ENCODE measurements at regions of chr11 and their contacts with region 1.

Region 1: DNA sequence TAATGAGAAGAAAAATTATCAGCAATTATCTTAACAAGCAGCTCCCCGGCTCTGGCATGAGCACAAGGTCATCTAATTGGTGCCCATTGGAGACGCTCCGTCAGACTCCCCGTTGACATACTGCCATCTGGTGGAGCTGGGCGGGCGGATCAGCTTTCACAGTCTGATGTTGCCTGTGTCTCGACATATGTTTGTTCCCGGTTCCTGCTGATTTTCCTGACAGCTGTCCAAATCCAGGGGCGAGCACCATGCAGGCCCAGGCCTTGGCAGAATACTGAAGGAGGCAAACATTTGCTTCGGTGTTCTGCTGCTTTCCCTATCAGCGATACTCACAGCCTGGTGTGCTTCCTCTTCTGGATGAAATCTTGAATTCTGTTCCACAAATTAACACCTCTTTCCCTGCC is 43.8 kb upstream of the BARX2 start:
- DNase-seq: peak; percentile 66 to 90 (median 86)
- H3K4me3 ChIP-seq: peak overlapping the region in 3 of 59 donors; percentile 6 to 21 (median 15)
- H3K27ac ChIP-seq: peak overlapping the region in 4 of 59 donors; percentile 16 to 37 (median 22)
- H3K27me3 ChIP-seq: no peaks in the 10 kb centered on the region
- CTCF ChIP-seq: peak; percentile 74 to 98 (median 93)

Region 2: DNA sequence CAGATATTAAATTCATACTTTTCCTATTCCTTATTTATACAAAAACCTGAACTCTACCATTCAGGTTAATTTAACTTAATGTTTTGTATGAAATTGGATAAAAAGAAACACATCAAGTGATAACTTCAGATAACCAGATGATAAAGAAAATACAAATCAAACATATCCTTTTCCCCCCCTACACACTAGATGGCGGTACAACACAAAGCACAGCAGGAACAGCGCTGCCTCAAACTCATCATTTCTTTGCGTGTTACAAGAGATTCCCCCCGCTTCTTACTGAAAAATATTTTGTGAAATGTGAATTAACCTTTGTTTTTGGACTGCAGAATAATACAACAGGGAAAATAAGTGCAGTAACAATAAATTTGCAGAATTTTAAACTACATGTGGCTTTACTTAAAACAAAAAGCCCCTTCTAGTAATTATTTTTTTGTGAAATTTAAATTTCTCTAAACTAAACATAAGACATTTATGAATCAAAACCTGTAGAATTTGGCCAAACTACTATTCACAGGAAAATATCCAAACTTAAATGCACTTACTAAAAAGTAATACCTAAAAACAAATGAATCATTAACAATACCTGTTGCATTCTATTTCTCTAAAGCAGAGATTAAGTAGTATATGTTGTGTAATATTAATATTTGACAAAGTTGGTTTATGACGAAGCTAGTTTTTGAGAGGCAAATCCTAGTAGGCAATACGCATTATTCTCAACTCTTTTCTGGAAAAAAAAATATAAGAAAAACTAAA is 214.1 kb before region 1 on chr11:
- intact Hi-C with region 1: loop called (anchors 2 to 5 kb)
- DNase-seq: peak in 3 of 10 donors; percentile 12 to 54 (median 27)
- H3K4me3 ChIP-seq: no peak overlapping the region
- H3K27ac ChIP-seq: no peak overlapping the region
- H3K27me3 ChIP-seq: no peaks in the 10 kb centered on the region
- CTCF ChIP-seq: peak; percentile 63 to 98 (median 90)

Region 3: GRCh38 chr11:129230006-129230405 is 101.9 kb before region 1 on chr11:
- intact Hi-C with region 1: loop called (anchors 1 to 5 kb)
- DNase-seq: no peak
- H3K4me3 ChIP-seq: no peak overlapping the region
- H3K27ac ChIP-seq: no peak overlapping the region
- H3K27me3 ChIP-seq: no peaks in the 10 kb centered on the region
- CTCF ChIP-seq: peak in 50 of 56 donors; percentile 9 to 73 (median 46)

Region 4: DNA sequence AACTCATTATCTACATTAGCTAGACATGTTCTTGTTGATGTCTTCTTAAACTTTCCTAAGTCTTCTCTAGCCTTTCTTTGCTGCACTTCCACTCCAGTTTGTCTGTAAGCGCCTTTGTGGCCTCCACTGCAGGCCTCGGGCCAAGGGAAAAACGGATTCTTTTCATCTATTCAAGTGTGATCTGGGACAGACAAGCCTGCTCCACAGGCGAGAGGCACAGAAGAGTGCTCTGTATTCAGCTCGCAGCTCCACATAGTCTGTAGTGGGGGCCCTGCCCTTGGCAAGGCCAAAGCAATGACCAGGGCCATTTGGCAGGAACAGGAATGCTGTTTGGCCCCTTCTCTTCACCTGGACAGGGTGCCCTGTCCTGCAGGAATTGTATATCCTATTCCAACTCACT is 40.3 kb before region 1 on chr11:
- intact Hi-C with region 1: no loop called
- DNase-seq: peak in 9 of 10 donors; percentile 33 to 78 (median 74)
- H3K4me3 ChIP-seq: no peak overlapping the region
- H3K27ac ChIP-seq: peak overlapping the region in 5 of 59 donors; percentile 2 to 55 (median 8)
- H3K27me3 ChIP-seq: peaks cover 0 to 24% (median 0%) of the 10 kb centered on the region in 45 donors
- CTCF ChIP-seq: peak in 5 of 56 donors; percentile 9 to 26 (median 20)

Measured in dorsolateral prefrontal cortex (tissue), 120 donors.